Common myeloid progenitor, CD34-positive (primary cell): ENCODE measurements at regions of chr15 and their contacts with region 1.

Region 1: GRCh38 chr15:55897560-55898336 is 95.7 kb downstream of the NEDD4 start:
- DNase-seq: peak in 2 of 3 donors; percentile 11 to 13
- H3K4me3 ChIP-seq: no peak overlapping the region
- H3K27ac ChIP-seq: no peak overlapping the region
- H3K4me1 ChIP-seq: peaks cover 9 to 20% (median 14%) of the 10 kb centered on the region in 4 experiments
- H3K27me3 ChIP-seq: no peaks in the 10 kb centered on the region

Region 2: GRCh38 chr15:55917881-55918296 is 20.1 kb after region 1 on chr15:
- CTCF ChIA-PET with region 1: interaction called, 38 read pairs
- POLR2A ChIA-PET with region 1: no interaction called
- DNase-seq: peak; percentile 62 to 78 (median 77)
- H3K4me3 ChIP-seq: no peak overlapping the region
- H3K27ac ChIP-seq: no peak overlapping the region
- H3K4me1 ChIP-seq: no peaks in the 10 kb centered on the region
- H3K27me3 ChIP-seq: no peaks in the 10 kb centered on the region